AG04449 (cell line): ENCODE measurements at regions of chr1 and their contacts with region 1.

Region 1: DNA sequence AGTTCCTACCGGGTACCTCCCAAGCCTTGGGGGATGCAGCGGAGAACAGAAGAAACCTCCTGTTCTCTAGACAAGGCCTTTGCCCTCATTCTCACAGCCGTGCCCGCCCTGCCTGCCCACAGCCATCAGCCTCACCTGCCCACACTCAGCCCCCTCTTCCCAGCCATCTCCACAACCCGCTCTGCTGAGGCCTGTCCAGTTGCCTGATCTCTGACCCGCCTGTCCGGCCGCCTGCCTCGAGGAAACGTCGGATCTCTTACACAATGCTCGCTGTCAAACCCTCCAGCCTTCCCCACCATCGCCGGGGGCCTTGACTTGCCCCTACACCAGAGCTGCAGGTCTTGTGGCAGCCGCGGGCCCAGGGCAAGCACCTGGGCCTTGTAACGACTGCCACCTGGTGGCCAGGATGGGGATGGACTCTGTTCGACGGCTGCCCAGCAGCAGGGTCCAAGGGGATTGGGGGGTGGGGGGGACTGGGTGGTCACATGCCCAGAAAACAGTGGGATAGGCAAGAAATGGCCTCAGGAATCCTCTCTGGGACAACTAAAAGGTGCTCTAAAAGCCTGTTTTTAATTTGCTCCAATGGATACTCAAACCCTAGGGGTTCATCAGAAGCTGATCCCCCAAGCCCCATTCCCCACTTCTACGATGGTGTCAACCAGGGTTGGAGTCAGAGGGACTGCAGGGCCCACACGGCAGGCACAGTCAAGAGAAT is 31.0 kb downstream of the SLC45A1 start:
- DNase-seq: no peak
- H3K4me3 ChIP-seq: no peak overlapping the region
- CTCF ChIP-seq: peak; percentile 79

Region 2: DNA sequence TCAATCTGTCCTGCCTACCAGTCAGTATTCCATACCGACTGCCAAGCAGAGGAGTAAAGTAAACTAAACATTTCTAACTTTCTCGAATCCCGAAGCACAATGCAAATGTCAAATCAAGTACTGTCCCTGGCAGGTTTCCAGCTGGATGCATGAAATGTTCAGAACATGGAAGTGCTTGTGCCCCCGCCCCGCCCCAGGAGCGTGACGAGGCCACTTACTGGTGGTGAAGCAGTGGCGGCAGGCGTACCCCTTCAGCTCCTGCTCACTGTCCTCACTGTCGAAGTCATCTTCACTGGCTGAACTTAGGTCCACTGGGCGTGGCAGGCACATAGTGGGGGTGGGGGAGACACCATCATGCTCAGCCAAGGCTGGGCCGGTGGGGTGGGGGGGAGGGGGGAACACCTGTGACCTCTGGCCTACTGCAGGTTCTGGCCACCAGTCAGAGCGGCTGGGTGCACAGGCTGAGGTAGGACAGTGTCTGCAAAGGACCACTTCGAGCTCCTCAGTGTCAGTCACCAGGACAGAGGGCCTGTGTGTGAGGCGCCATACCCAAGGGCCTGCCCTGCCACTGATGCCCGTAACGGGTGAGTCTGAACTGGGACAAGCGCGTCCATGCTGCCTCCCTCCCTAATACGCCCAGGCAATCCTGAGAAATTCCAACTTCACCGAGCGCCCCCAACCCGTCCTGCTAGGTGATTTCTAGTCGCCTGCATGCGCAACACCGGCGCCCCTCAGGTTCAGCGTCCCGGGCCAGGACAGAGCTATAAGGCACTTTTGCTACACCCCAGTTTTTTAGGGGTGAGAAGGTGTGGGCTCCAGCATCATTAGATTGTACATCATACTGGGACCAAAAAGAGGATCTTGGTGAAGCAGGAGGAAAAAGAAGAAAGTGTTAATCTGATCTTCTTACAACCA is 15.9 kb after region 1 on chr1:
- CTCF ChIA-PET with region 1: interaction called, 122 read pairs
- POLR2A ChIA-PET with region 1: no interaction called
- DNase-seq: no peak
- H3K4me3 ChIP-seq: no peak overlapping the region
- CTCF ChIP-seq: no peak

Region 3: GRCh38 chr1:8423650-8424538 is 75.0 kb after region 1 on chr1:
- CTCF ChIA-PET with region 1: no interaction called
- POLR2A ChIA-PET with region 1: no interaction called
- DNase-seq: no peak
- H3K4me3 ChIP-seq: peak overlapping the region; percentile 74
- CTCF ChIP-seq: no peak